HCT116 (cell line): ENCODE measurements at regions of chr17 and their contacts with region 1.

Region 1: GRCh38 chr17:42116705-42117396 is 4.3 kb downstream of the KAT2A start:
- DNase-seq: peak; percentile 44
- ATAC-seq: peak; percentile 43
- H3K4me3 ChIP-seq: no peak overlapping the region
- H3K27ac ChIP-seq: no peak overlapping the region
- H3K4me1 ChIP-seq: peaks cover 5 to 24% of the 10 kb centered on the region in 2 experiments; a peak in 3 of 4 replicates
- H3K27me3 ChIP-seq: no peaks in the 10 kb centered on the region
- CTCF ChIP-seq: peak; percentile 74 to 81 (median 75)
- POLR2A ChIP-seq: no peak
- RAD21 ChIP-seq: peak; percentile 84

Region 2: DNA sequence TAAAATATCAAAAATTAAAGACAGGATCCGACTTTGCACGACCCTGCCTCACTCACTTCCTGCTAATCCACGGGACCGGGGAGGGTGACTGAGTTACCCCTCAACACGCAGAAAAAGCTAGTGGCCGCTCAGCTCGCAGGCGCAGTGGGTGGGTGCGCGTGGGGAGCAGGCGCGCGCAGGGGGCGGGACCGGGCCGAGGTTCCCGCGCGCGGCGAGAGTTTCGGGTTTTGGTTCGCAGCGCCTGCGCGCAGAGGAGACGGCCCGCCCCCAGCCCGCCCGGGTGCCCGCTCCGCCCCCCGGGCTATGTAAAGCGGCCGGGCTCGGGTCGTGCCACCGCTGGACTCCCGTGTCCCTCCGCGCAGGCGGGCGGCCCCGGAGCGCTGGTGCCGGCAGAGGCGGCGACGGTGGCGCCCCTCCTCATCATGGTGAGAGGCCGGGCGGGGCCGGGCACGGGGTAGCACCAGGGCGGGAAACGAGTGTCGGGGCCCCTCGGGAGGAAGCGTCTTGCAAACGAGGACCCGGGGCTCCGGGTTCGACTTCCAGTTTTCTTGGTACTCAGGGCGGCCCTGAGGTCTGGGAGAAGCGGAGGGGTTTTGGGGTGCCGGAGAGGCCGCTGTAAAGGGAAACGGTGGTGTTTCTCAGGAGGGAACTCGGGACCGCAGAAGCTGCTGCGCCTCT is 150.2 kb before region 1 on chr17 and contains the start of gene CNP:
- CTCF ChIA-PET with region 1: interaction called, 5 read pairs
- POLR2A ChIA-PET with region 1: no interaction called
- RAD21 ChIA-PET with region 1: interaction called in 1 of 2 experiments, 3 read pairs
- intact Hi-C with region 1: loop called (anchors 1 kb)
- DNase-seq: peak; percentile 73
- ATAC-seq: peak; percentile 76
- H3K4me3 ChIP-seq: peak within 1 kb of the TSS; percentile 54 to 77
- H3K27ac ChIP-seq: peak within 1 kb of the TSS; percentile 73
- H3K4me1 ChIP-seq: peaks cover 7 to 22% of the 10 kb centered on the region in 2 experiments
- H3K27me3 ChIP-seq: no peaks in the 10 kb centered on the region
- CTCF ChIP-seq: no peak
- POLR2A ChIP-seq: peak; percentile 79
- RAD21 ChIP-seq: no peak
- total RNA-seq, gene CNP: 51.2 TPM

Region 3: DNA sequence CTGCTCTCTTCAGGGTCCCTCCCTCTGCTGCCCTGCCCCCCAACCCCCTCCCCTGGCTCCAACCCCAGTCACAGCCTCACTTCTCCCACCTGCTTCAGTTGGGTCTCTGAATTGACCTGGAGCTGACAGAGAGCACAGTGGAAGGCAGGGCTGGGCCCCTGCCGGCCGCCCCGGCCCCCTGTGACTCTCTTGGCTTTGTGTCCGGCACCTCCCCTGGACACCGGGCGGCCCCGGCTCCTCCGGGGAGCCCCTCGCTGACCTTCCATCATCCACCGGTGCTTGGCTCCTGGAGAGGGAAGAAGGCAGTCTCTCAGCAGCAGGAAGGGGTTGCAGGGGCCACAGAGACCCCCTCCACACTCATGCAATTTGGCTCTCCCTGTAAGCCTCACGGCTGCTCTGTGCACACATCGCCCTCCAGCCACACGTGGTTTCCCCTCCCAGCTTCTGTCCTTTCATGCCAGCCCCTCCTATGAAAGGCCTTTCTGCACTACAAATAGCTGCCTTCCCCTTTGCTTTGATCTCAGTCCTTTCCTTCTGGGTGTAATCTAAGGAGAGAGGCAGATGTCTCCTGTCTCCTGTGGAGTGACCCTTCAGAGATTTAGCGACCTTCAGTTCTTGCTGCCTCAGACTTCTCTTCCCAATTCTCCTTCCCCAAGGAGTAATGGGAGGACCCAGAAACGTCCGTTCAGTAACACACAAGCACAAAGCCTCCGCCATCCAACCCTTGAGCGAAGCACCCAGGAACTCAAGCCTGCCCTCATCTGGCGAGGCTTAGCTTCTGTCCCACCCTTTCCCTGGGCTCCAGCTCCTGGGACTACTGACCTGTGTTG is 88.7 kb before region 1 on chr17:
- CTCF ChIA-PET with region 1: interaction called, 3 read pairs
- POLR2A ChIA-PET with region 1: no interaction called
- RAD21 ChIA-PET with region 1: interaction called in 1 of 2 experiments, 3 read pairs
- intact Hi-C with region 1: loop called (anchors 1 kb)
- DNase-seq: peak; percentile 39
- ATAC-seq: peak; percentile 77
- H3K4me3 ChIP-seq: no peak overlapping the region
- H3K27ac ChIP-seq: no peak overlapping the region
- H3K4me1 ChIP-seq: peaks cover 15 to 32% of the 10 kb centered on the region in 2 experiments
- H3K27me3 ChIP-seq: no peaks in the 10 kb centered on the region
- CTCF ChIP-seq: peak; percentile 47 to 68 (median 56); a peak in 5 of 6 replicates
- POLR2A ChIP-seq: no peak
- RAD21 ChIP-seq: peak; percentile 36

Region 4: DNA sequence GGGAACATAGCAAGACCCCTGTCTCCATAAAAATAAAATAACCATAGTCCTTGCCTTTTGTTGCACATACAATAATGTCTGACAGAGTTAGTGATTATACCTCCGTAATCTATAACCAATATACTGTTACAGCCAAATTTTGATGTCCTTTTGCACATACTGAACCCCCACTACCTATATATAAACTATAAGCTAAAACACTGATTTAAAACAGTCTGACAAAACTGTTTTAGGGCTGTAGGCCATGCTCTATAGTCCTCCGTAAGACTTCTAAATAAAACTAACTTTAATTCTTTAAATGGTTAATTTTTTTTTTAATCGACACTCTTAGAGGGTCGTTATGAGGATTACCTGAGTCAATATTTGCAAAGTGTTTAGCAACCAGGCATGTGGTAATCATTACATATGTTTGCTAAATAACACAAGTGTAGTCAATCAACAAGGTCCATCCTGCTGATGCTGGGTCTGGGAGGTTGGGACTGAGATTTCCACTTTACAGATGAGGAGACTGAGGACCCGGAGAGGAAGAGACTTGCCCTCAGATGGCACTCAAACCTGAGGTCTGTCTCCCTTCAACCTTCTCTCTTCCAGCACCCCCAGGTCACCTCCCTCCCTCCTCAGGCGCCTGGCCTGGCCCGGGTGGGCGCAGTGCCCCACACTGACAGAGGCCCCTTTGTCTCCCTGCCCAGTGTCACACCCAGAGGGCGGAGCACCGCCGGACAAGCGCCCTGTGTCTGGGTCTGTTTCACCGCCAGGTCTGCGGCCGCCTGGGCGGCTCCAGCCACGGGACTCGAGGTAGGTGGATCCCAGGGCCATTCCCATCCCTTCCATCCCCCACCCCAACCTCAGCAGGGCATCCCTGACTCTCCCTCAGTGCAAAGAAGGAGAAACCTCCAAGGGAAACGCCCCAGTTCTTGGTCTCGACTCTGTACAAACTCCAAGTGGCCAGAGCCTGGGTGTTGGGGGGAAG is 28.8 kb before region 1 on chr17:
- CTCF ChIA-PET with region 1: no interaction called
- POLR2A ChIA-PET with region 1: no interaction called
- RAD21 ChIA-PET with region 1: no interaction called
- intact Hi-C with region 1: no loop called
- DNase-seq: peak; percentile 31
- ATAC-seq: peak; percentile 99
- H3K4me3 ChIP-seq: peak overlapping the region; percentile 18 to 35
- H3K27ac ChIP-seq: no peak overlapping the region
- H3K4me1 ChIP-seq: peaks cover 9 to 21% of the 10 kb centered on the region in 2 experiments; a peak in 3 of 4 replicates
- H3K27me3 ChIP-seq: no peaks in the 10 kb centered on the region
- CTCF ChIP-seq: no peak
- POLR2A ChIP-seq: no peak
- RAD21 ChIP-seq: no peak

Region 5: GRCh38 chr17:42527273-42527703 is 410.4 kb after region 1 on chr17:
- CTCF ChIA-PET with region 1: interaction called, 5 read pairs
- POLR2A ChIA-PET with region 1: no interaction called
- RAD21 ChIA-PET with region 1: no interaction called
- intact Hi-C with region 1: loop called (anchors 5 kb)
- DNase-seq: peak; percentile 69
- ATAC-seq: peak; percentile 92
- H3K4me3 ChIP-seq: no peak overlapping the region
- H3K27ac ChIP-seq: no peak overlapping the region
- H3K4me1 ChIP-seq: peaks cover 27 to 66% of the 10 kb centered on the region in 2 experiments
- H3K27me3 ChIP-seq: no peaks in the 10 kb centered on the region
- CTCF ChIP-seq: peak; percentile 86 to 95 (median 91)
- POLR2A ChIP-seq: no peak
- RAD21 ChIP-seq: peak; percentile 97